ENCODE measurements at regions of chr15 and their contacts with region 1.

Region 1: GRCh38 chr15:51401872-51402517 is 60.5 kb downstream of the GLDN start:
- DNase-seq: peak in 1 of 2 experiments; percentile 86
- H3K4me3 ChIP-seq: no peak overlapping the region
- H3K27ac ChIP-seq: no peak overlapping the region
- H3K4me1 ChIP-seq: peaks cover 0 to 8% (median 0%) of the 10 kb centered on the region in 4 experiments; a peak in 2 of 7 replicates
- H3K27me3 ChIP-seq: no peaks in the 10 kb centered on the region
- CTCF ChIP-seq: peak; percentile 83 to 87 (median 84)
- EP300 ChIP-seq: no peak
- POLR2A ChIP-seq: no peak
- RAD21 ChIP-seq: peak; percentile 75 to 80

Region 2: GRCh38 chr15:51192521-51193280 is 209.3 kb before region 1 on chr15:
- CTCF ChIA-PET with region 1: interaction called, 10 read pairs
- POLR2A ChIA-PET with region 1: no interaction called
- DNase-seq: peak; percentile 87 to 100
- H3K4me3 ChIP-seq: no peak overlapping the region
- H3K27ac ChIP-seq: no peak overlapping the region
- H3K4me1 ChIP-seq: no peaks in the 10 kb centered on the region
- H3K27me3 ChIP-seq: no peaks in the 10 kb centered on the region
- CTCF ChIP-seq: peak; percentile 80 to 92 (median 88)
- EP300 ChIP-seq: no peak
- POLR2A ChIP-seq: no peak
- RAD21 ChIP-seq: peak; percentile 78 to 81

Region 3: DNA sequence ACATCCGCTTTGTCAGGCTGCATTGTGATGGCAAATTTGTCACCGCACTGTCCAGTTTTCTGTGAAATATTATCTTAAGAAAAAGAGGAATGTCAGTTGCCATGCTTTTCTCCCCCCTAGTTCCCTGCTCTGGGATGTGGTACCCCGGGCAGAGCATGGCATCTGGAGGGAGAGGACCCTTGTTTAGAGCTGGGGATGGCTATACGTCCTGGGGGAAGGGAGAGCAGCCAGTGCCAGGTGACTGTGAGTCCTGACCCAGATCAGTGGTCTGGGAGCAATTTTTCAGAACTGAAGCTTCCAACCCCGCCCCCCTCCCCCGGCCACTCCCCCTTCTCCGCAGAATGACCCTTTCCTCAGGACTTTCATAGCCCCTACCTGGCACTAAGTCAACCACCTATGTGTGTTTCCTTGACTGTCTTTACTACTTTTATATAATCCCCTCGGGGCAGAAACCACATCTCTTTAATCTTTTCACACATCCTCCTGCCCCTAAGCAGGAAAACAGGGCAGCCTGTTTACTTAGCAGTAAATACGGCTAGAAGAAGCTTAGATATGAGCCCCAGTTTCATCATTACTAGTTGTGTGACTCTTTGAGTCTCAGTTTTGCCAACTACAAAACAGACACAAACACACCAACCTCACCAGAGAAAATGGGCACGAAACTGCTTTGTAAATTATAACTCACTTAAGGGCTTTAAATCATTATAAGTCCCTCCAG is 162.1 kb before region 1 on chr15:
- CTCF ChIA-PET with region 1: interaction called, 21 read pairs
- POLR2A ChIA-PET with region 1: no interaction called
- DNase-seq: no peak
- H3K4me3 ChIP-seq: no peak overlapping the region
- H3K27ac ChIP-seq: no peak overlapping the region
- H3K4me1 ChIP-seq: peaks cover 0 to 11% (median 2%) of the 10 kb centered on the region in 4 experiments; a peak in 3 of 7 replicates
- H3K27me3 ChIP-seq: no peaks in the 10 kb centered on the region
- CTCF ChIP-seq: no peak
- EP300 ChIP-seq: no peak
- POLR2A ChIP-seq: no peak
- RAD21 ChIP-seq: no peak

Region 4: DNA sequence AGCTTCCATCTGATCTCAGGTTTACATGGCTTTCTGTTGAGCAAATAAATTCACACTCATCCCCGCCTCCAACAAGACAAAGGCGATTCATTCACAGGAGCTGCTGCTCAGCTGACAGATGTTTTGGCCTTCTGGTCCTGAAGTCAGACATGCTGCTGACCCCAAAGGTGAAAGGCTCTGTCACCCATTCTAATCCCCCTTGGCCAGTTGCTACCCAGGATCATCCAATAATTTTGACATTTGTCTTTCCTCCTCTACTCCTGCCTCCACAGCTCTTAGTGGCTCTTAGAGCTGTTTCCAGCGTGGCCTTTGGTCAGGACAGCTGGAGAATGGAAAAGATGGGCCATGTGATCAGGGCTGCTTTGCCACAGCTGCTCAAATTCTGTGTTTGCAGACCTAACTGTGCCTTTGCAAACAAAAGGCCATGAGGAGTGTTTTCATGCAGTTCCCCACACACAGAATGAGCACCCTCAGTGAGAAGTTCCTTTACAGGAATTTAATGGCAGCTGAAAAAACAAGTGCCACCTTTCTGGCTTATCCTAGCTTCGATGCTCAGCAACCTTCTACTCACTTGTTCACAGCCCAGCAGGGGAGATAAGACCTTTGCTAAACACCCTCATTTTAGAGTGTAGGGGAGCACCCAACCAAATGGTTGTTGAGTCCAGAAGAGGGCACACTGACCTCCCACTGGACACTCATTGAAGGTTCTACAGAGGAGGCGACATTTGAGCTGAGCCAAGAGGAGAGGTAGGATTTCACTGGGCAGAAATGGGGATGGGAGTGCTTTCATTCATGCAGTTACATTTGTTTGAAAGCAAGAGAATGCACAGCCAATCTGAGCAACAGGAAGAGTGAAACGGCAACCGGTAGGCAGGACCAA is 102.6 kb before region 1 on chr15:
- CTCF ChIA-PET with region 1: interaction called, 14 read pairs
- POLR2A ChIA-PET with region 1: no interaction called
- DNase-seq: no peak
- H3K4me3 ChIP-seq: no peak overlapping the region
- H3K27ac ChIP-seq: no peak overlapping the region
- H3K4me1 ChIP-seq: no peaks in the 10 kb centered on the region
- H3K27me3 ChIP-seq: no peaks in the 10 kb centered on the region; a peak in 1 of 7 replicates
- CTCF ChIP-seq: no peak
- EP300 ChIP-seq: no peak
- POLR2A ChIP-seq: no peak
- RAD21 ChIP-seq: no peak

Region 5: DNA sequence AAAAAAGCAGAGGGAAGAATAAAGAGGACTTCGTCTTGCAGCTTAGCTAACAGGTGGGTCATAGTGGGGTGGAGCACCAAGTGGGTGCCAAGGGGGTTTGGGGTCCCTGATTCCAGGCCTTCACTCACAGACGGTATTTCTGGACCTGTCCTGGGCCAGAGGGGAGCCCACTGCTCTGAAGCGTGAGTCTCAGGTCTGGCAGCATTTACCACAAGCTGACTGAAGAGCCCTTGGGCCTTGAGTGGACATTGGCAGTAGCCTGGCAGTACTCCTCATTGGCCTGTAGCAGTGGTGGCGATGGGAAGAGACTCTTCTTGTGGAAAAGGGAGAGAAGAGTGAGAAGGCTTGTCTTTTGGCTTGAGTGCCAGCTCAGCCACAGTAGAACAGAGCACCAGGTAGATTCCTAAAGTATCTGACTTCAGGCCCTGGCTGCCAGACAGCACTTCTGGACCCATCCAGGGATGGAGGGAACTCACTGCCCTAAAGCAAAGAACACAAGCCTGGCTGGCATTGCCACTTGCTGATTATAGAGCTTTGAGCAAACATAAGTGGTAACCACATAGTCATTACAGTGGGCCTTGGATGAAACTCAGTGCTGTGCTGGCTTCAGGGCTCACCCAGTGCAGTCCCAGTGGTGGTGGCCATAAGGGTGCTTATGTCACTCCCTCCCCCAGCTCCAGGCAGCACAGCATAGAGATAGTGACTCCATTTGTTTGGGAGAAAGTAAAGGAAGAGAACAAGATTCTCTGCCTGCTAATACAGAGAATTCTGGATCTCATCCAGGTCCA is 12.5 kb after region 1 on chr15:
- CTCF ChIA-PET with region 1: interaction called, 31 read pairs
- POLR2A ChIA-PET with region 1: no interaction called
- DNase-seq: no peak
- H3K4me3 ChIP-seq: no peak overlapping the region
- H3K27ac ChIP-seq: no peak overlapping the region
- H3K4me1 ChIP-seq: peaks cover 0 to 2% (median 1%) of the 10 kb centered on the region in 4 experiments; a peak in 2 of 7 replicates
- H3K27me3 ChIP-seq: no peaks in the 10 kb centered on the region
- CTCF ChIP-seq: no peak
- EP300 ChIP-seq: no peak
- POLR2A ChIP-seq: no peak
- RAD21 ChIP-seq: no peak

Region 6: DNA sequence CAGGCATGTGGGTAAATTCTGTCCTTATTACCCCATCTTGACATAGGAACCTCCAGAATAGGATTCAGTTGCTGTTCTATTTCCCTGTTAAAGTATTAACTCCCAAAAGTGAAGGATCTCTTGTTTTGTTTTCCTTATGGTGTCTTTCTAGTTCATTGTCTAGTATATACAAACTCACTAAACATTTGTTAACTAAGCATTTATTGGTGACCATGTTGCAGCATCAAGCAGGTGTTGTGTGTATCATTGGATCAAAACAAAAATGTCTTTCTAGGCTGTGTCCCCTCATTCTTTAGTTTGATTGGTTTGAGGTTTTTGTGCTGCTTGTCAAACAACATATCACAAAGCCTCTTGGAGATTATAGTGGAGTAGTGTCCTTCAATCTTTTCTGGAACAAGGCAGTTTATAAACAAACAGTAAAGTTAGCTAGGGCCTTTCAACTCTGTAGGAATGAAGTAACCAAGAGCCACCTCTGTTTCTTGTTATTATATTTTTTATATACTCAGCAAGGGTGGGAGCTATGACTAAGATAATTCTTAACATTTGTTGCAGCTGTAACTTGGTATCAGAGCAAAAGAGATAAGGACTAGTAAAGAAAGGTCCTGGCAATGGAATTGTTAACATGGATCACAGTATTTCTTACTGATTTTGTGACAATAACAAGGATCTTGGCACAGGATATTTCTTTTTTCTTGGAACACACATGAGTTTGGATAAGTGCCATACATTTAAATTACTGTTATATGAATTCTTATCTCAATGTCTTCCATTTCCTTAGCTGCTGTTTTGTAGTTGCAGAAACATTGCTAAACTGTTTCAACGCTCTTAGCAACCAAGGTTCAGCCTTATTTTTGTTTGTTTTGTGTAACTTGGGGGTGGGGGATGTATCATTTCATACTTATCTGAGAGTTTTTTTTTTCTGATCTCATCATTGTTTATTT is 476.7 kb after region 1 on chr15:
- CTCF ChIA-PET with region 1: no interaction called
- POLR2A ChIA-PET with region 1: no interaction called
- DNase-seq: no peak
- H3K4me3 ChIP-seq: no peak overlapping the region
- H3K27ac ChIP-seq: no peak overlapping the region
- H3K4me1 ChIP-seq: no peaks in the 10 kb centered on the region; a peak in 2 of 7 replicates
- H3K27me3 ChIP-seq: no peaks in the 10 kb centered on the region
- CTCF ChIP-seq: no peak
- EP300 ChIP-seq: no peak
- POLR2A ChIP-seq: no peak
- RAD21 ChIP-seq: no peak

Measured in H1 (cell line).